ENCODE measurements at regions of chr1 and their contacts with region 1.

Region 1: GRCh38 chr1:171313835-171314320 is at the start of gene FMO4:
- DNase-seq: peak; percentile 74
- ATAC-seq: peak; percentile 94
- H3K4me3 ChIP-seq: peak within 1 kb of the TSS in 1 of 2 experiments; percentile 12; a peak in 1 of 4 replicates
- H3K27ac ChIP-seq: no peak within 1 kb of the TSS
- H3K4me1 ChIP-seq: no peaks in the 10 kb centered on the region
- H3K27me3 ChIP-seq: no peaks in the 10 kb centered on the region
- CTCF ChIP-seq: peak; percentile 81
- total RNA-seq, gene FMO4: 0.33 TPM

Region 2: GRCh38 chr1:170967042-170967910 is 346.6 kb before region 1 on chr1:
- CTCF ChIA-PET with region 1: interaction called, 18 read pairs
- POLR2A ChIA-PET with region 1: no interaction called
- in situ Hi-C with region 1: no loop called
- intact Hi-C with region 1: loop called (anchors 2 kb)
- DNase-seq: peak; percentile 2
- ATAC-seq: no peak; the same call in 1 of the 2 replicates
- H3K4me3 ChIP-seq: no peak overlapping the region
- H3K27ac ChIP-seq: no peak overlapping the region
- H3K4me1 ChIP-seq: no peaks in the 10 kb centered on the region
- H3K27me3 ChIP-seq: no peaks in the 10 kb centered on the region
- CTCF ChIP-seq: peak; percentile 53; the same call in 1 of the 2 replicates

Region 3: DNA sequence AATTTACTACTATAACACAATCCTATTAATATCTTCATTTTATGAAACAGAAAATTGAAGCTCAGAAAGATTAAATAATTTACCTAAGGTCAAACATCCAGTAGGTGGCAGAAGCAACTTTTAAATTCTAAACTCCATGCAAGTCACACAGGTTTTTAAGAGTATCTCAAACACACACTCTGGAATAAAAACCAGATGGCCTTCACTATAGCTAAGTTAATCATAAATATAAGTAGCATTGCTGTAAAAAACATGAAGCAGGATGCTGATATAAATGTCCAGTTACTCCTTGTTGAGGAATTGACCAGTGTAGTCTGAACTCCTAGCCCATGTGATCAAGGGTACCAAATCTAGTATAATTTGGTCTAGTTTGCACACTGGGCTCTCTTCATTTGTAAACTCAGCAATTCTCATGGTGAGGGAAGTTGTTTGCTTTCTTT is 232.5 kb before region 1 on chr1:
- CTCF ChIA-PET with region 1: interaction called, 11 read pairs
- POLR2A ChIA-PET with region 1: no interaction called
- in situ Hi-C with region 1: no loop called
- intact Hi-C with region 1: no loop called
- DNase-seq: no peak
- ATAC-seq: no peak
- H3K4me3 ChIP-seq: no peak overlapping the region
- H3K27ac ChIP-seq: no peak overlapping the region
- H3K4me1 ChIP-seq: no peaks in the 10 kb centered on the region
- H3K27me3 ChIP-seq: no peaks in the 10 kb centered on the region
- CTCF ChIP-seq: peak; percentile 42; the same call in 1 of the 2 replicates

Region 4: DNA sequence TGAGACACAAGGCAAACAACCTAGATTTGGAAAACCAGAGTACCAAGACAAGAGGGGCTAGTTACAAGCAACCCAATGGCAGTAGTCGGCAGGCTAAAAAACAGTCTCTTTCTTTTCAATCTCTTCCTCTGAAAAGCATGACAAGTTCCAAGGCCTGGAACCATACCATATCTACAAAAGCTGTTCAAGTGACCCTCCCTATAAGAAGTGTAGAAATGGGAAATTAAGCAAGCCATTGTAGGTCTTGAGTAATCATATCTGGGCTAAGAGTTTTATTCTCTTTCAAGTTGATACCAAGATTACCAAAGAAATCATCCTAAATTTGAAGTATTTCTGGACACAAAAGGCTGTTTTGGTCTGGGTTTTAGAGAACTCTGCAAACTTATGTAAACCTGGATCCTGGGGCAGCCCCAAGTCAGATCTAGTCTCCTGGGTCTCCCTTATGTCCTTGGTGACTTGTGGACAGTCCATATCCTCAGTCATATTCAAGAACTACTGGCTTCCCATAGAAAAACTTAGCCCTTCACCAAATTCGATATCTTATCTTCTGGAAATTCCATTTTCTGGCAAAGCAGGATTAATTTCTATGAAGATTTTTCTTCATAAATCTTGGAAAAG is 198.5 kb before region 1 on chr1:
- CTCF ChIA-PET with region 1: no interaction called
- POLR2A ChIA-PET with region 1: no interaction called
- in situ Hi-C with region 1: no loop called
- intact Hi-C with region 1: no loop called
- DNase-seq: no peak
- ATAC-seq: no peak
- H3K4me3 ChIP-seq: no peak overlapping the region
- H3K27ac ChIP-seq: no peak overlapping the region
- H3K4me1 ChIP-seq: no peaks in the 10 kb centered on the region
- H3K27me3 ChIP-seq: peaks cover 2% of the 10 kb centered on the region; the same call in 1 of the 2 replicates
- CTCF ChIP-seq: no peak

Region 5: GRCh38 chr1:171245458-171246064 is 68.3 kb before region 1 on chr1:
- CTCF ChIA-PET with region 1: interaction called, 12 read pairs
- POLR2A ChIA-PET with region 1: no interaction called
- in situ Hi-C with region 1: no loop called
- intact Hi-C with region 1: no loop called
- DNase-seq: no peak
- ATAC-seq: peak; percentile 89
- H3K4me3 ChIP-seq: no peak overlapping the region
- H3K27ac ChIP-seq: no peak overlapping the region
- H3K4me1 ChIP-seq: no peaks in the 10 kb centered on the region
- H3K27me3 ChIP-seq: peaks cover 11% of the 10 kb centered on the region
- CTCF ChIP-seq: peak; percentile 81

Region 6: GRCh38 chr1:171279678-171280077 is 34.2 kb before region 1 on chr1:
- CTCF ChIA-PET with region 1: no interaction called
- POLR2A ChIA-PET with region 1: no interaction called
- in situ Hi-C with region 1: no loop called
- intact Hi-C with region 1: no loop called
- DNase-seq: no peak
- ATAC-seq: no peak
- H3K4me3 ChIP-seq: no peak overlapping the region
- H3K27ac ChIP-seq: no peak overlapping the region
- H3K4me1 ChIP-seq: no peaks in the 10 kb centered on the region
- H3K27me3 ChIP-seq: no peaks in the 10 kb centered on the region
- CTCF ChIP-seq: no peak

Measured in Panc1 (cell line).